Caco-2 (cell line): ENCODE measurements at regions of chr6 and their contacts with region 1.

Region 1: DNA sequence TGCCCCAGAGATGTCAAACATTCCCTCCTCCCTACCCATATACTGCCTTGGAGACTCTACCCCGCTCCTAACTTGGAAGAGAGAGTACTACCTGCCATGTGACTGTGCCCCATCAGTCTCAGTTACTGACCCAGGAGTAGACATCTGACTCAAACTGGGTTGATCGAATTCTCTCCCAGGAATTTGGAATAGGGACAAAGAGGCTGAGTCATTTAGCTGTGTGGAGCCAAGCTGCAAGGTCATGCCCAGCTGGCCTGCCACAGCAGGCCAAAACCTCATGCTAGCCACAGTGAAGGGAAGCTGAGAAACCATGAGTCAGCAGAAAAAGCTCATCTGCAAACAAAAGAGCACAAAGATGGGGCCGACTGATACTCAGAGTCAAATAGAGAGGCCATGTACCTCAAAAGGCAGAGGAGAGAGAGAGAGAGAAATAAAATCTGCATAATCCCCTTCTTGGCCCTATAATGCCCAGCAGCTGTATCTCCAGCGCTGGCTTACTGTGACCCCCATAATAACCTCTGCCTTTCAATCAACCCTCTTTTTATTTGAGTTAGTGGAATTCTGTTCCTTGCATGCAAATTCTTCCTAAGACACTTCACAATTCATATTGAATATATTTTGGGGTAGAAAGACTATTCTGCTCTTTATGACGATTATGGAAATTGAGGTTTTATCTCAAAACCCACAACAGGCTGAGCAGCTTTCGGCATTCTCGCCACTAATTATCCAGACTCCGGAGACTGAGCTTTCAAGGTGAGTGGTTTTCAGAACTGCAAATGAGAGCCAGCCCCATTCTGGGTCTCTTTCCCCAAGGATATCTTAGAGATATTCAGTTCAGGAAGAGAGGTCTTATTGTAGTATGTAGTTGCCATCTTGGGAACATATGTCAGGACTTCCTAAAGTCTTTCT is 21.4 kb upstream of the AKIRIN2 start:
- DNase-seq: no peak
- H3K4me3 ChIP-seq: no peak overlapping the region
- H3K4me3 Mint-ChIP-seq: no peak overlapping the region
- H3K27ac Mint-ChIP-seq: no peak overlapping the region
- H3K4me1 ChIP-seq: peaks cover 9% of the 10 kb centered on the region; the same call in 1 of the 2 replicates
- H3K4me1 Mint-ChIP-seq: peaks cover 10% of the 10 kb centered on the region
- H3K27me3 ChIP-seq: no peaks in the 10 kb centered on the region
- H3K27me3 Mint-ChIP-seq: no peaks in the 10 kb centered on the region
- CTCF ChIP-seq: no peak

Region 2: GRCh38 chr6:87822011-87822410 is 98.6 kb after region 1 on chr6:
- CTCF ChIA-PET with region 1: no interaction called
- POLR2A ChIA-PET with region 1: interaction called, 20 read pairs
- intact Hi-C with region 1: no loop called
- DNase-seq: peak in 1 of 2 experiments; percentile 19
- H3K4me3 ChIP-seq: no peak overlapping the region
- H3K4me3 Mint-ChIP-seq: no peak overlapping the region
- H3K27ac Mint-ChIP-seq: no peak overlapping the region
- H3K4me1 ChIP-seq: peaks cover 12% of the 10 kb centered on the region
- H3K4me1 Mint-ChIP-seq: peaks cover 9% of the 10 kb centered on the region
- H3K27me3 ChIP-seq: no peaks in the 10 kb centered on the region
- H3K27me3 Mint-ChIP-seq: no peaks in the 10 kb centered on the region
- CTCF ChIP-seq: no peak

Region 3: DNA sequence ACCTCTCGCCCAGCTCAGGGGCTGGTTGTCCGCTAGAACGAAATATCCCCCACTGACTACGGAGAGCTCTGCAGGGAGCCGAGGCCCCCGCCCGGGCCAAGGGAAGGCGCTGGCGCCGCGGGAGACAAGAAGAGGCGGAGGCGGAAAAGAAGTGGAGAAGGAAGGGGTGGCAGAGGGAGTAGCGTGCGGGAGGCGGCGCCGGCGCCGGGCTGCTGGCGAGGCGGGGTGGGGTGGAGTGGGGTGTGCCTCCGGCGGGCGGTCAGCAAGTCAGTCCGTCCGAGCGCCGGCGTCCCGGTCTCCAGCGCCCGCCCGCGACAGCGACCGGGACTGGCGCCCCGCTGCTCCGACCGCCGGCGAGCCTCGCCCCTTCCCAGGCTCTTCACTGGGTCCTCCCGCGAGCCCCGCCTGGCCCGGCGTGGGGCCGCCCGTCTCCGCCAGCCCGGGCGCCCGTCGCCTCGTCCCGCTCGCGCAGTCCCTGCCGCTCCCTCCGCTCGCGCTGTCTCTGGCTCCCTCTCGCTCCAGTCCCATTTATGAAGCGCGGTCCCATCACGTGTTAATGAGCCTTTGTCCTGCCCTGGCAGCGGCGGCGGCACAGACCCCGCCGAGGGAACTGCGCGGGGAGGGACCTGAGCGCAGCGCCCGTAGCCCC is 442.5 kb after region 1 on chr6 and contains the start of gene CNR1:
- CTCF ChIA-PET with region 1: no interaction called
- POLR2A ChIA-PET with region 1: no interaction called
- intact Hi-C with region 1: no loop called
- DNase-seq: peak in 1 of 2 experiments; percentile 49
- H3K4me3 ChIP-seq: peak within 1 kb of the TSS; percentile 43
- H3K4me3 Mint-ChIP-seq: peak within 1 kb of the TSS; percentile 73
- H3K27ac Mint-ChIP-seq: no peak within 1 kb of the TSS
- H3K4me1 ChIP-seq: 0 out of 2 replicates have a peak, but pooled peaks cover 5% of the 10 kb centered on the region
- H3K4me1 Mint-ChIP-seq: peaks cover 6% of the 10 kb centered on the region
- H3K27me3 ChIP-seq: peaks cover 2% of the 10 kb centered on the region; the same call in 1 of the 2 replicates
- H3K27me3 Mint-ChIP-seq: peaks cover 34% of the 10 kb centered on the region
- CTCF ChIP-seq: no peak
- total RNA-seq, gene CNR1: not detected in 2 replicates